Posterior vena cava (tissue), 2 donors: ENCODE measurements at regions of chrX and their contacts with region 1.

Region 1: DNA sequence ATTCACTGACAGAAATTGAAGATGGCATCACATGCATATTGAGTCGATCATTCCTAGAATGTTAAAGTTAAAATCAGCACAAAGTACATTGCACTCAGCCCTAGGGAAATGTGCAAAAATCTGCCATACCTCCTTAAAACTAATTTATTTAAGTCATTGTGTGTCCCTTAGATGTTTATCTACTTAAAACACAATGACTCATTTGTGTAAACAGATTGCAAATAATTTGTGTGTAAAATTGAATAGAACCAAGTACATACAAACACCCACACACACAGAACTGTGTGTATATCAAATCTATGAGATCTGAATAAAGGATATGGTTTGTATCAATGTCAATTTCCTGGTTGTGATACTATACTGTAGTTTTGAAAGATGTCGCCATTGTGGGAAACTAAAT is 59.1 kb downstream of the VCX3B start:
- DNase-seq: no peak

Region 2: GRCh38 chrX:8191022-8191421 is 332.7 kb before region 1 on chrX:
- intact Hi-C with region 1: no loop called
- DNase-seq: no peak

Region 3: GRCh38 chrX:8455557-8455956 is 68.2 kb before region 1 on chrX:
- intact Hi-C with region 1: loop called in 1 of 2 experiments (anchors 2 kb)
- DNase-seq: no peak